ENCODE measurements at regions of chr15 and their contacts with region 1.

Region 1: GRCh38 chr15:56491110-56491722 is 26.3 kb upstream of the MNS1 start:
- DNase-seq: peak in 3 of 4 donors; percentile 43 to 84 (median 68)
- ATAC-seq: peak; percentile 91
- H3K4me3 ChIP-seq: no peak overlapping the region
- H3K27ac ChIP-seq: no peak overlapping the region
- H3K4me1 ChIP-seq: no peaks in the 10 kb centered on the region
- H3K27me3 ChIP-seq: no peaks in the 10 kb centered on the region
- CTCF ChIP-seq: peak; percentile 73 to 84

Region 2: GRCh38 chr15:56871180-56871579 is 380.0 kb after region 1 on chr15:
- intact Hi-C with region 1: loop called in 1 of 2 experiments (anchors 10 kb)
- DNase-seq: no peak
- ATAC-seq: peak; percentile 24
- H3K4me3 ChIP-seq: no peak overlapping the region
- H3K27ac ChIP-seq: no peak overlapping the region
- H3K4me1 ChIP-seq: no peaks in the 10 kb centered on the region
- H3K27me3 ChIP-seq: no peaks in the 10 kb centered on the region
- CTCF ChIP-seq: no peak